ENCODE measurements at regions of chr7 and their contacts with region 1.

Region 1: GRCh38 chr7:92200791-92201190 is 21.8 kb upstream of the LRRD1 start:
- DNase-seq: no peak
- ATAC-seq: no peak
- H3K4me3 ChIP-seq: no peak overlapping the region
- H3K27ac ChIP-seq: no peak overlapping the region
- H3K4me1 ChIP-seq: no peaks in the 10 kb centered on the region
- H3K27me3 ChIP-seq: no peaks in the 10 kb centered on the region
- CTCF ChIP-seq: no peak

Region 2: GRCh38 chr7:92119213-92119759 is 81.5 kb before region 1 on chr7:
- intact Hi-C with region 1: loop called in 1 of 10 experiments (anchors 10 kb)
- DNase-seq: no peak
- ATAC-seq: no peak
- H3K4me3 ChIP-seq: no peak overlapping the region
- H3K27ac ChIP-seq: no peak overlapping the region
- H3K4me1 ChIP-seq: no peaks in the 10 kb centered on the region
- H3K27me3 ChIP-seq: no peaks in the 10 kb centered on the region
- CTCF ChIP-seq: no peak

Region 3: GRCh38 chr7:92295391-92295790 is 94.6 kb after region 1 on chr7:
- intact Hi-C with region 1: no loop called
- DNase-seq: peak in 1 of 2 donors; percentile 25
- ATAC-seq: peak in 1 of 8 donors; percentile 22
- H3K4me3 ChIP-seq: peak overlapping the region in 1 of 10 donors; percentile 3
- H3K27ac ChIP-seq: peak overlapping the region in 6 of 10 donors; percentile 11 to 70 (median 25)
- H3K4me1 ChIP-seq: peaks cover 3 to 39% (median 28%) of the 10 kb centered on the region in 9 donors
- H3K27me3 ChIP-seq: no peaks in the 10 kb centered on the region
- CTCF ChIP-seq: no peak

Region 4: DNA sequence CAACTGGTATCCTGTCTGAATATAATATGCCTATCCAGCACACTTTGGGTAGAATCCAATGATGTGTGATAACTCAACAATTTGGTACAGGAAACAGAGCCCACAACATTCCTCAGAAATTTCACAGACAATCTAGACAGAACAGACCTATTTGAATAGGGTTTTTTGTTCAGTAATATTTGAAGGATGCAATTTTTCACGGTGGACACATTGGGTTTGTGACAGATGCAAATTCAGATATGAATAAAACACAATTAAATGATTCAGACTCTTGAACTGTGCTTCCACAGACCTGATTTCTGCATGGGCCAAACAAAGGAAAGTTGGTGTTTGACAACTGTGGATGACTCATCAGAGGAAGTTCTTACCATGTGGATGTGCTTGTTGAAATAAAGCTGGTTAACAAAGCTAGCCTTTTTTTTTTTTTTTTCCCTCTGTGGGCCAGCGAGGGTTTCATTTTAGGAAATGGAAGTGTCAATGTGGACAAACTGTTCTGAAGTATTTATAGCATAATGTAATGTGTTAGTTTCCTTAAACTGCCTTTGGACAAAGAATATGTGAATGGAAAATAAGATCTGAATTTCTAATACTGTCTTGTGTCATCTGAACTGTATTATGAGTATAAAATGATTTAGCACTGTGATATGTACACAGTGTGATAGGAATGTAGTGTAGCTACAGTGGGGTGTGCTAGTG is 432.6 kb after region 1 on chr7:
- intact Hi-C with region 1: no loop called
- DNase-seq: peak in 1 of 2 donors; percentile 23
- ATAC-seq: peak; percentile 80 to 93 (median 90)
- H3K4me3 ChIP-seq: peak overlapping the region in 1 of 10 donors; percentile 2
- H3K27ac ChIP-seq: peak overlapping the region; percentile 13 to 70 (median 50)
- H3K4me1 ChIP-seq: peaks cover 9 to 57% (median 52%) of the 10 kb centered on the region in 9 donors
- H3K27me3 ChIP-seq: no peaks in the 10 kb centered on the region
- CTCF ChIP-seq: no peak

Region 5: GRCh38 chr7:92751902-92752901 is 551.4 kb after region 1 on chr7:
- intact Hi-C with region 1: no loop called
- DNase-seq: no peak
- ATAC-seq: no peak
- H3K4me3 ChIP-seq: no peak overlapping the region
- H3K27ac ChIP-seq: no peak overlapping the region
- H3K4me1 ChIP-seq: peaks cover 0 to 37% (median 22%) of the 10 kb centered on the region in 9 donors
- H3K27me3 ChIP-seq: no peaks in the 10 kb centered on the region
- CTCF ChIP-seq: no peak